ENCODE measurements at regions of chr7 and their contacts with region 1.

Region 1: GRCh38 chr7:106887421-106887820 is 22.3 kb downstream of the PIK3CG start:
- DNase-seq: no peak
- H3K4me3 Mint-ChIP-seq: no peak overlapping the region
- H3K27ac Mint-ChIP-seq: peak overlapping the region; percentile 18
- H3K4me1 Mint-ChIP-seq: peaks cover 19% of the 10 kb centered on the region
- H3K27me3 Mint-ChIP-seq: no peaks in the 10 kb centered on the region

Region 2: GRCh38 chr7:106855540-106856132 is 31.8 kb before region 1 on chr7:
- CTCF ChIA-PET with region 1: no interaction called
- POLR2A ChIA-PET with region 1: no interaction called
- intact Hi-C with region 1: loop called (anchors 1 kb)
- DNase-seq: peak; percentile 30
- H3K4me3 Mint-ChIP-seq: no peak overlapping the region
- H3K27ac Mint-ChIP-seq: no peak overlapping the region
- H3K4me1 Mint-ChIP-seq: peaks cover 8% of the 10 kb centered on the region
- H3K27me3 Mint-ChIP-seq: no peaks in the 10 kb centered on the region

Region 3: GRCh38 chr7:106870983-106871410 is 16.4 kb before region 1 on chr7:
- CTCF ChIA-PET with region 1: no interaction called
- POLR2A ChIA-PET with region 1: no interaction called
- intact Hi-C with region 1: loop called (anchors 1 kb)
- DNase-seq: no peak
- H3K4me3 Mint-ChIP-seq: no peak overlapping the region
- H3K27ac Mint-ChIP-seq: peak overlapping the region; percentile 40
- H3K4me1 Mint-ChIP-seq: peaks cover 69% of the 10 kb centered on the region
- H3K27me3 Mint-ChIP-seq: no peaks in the 10 kb centered on the region